ENCODE measurements at regions of chr13 and their contacts with region 1.

Region 1: DNA sequence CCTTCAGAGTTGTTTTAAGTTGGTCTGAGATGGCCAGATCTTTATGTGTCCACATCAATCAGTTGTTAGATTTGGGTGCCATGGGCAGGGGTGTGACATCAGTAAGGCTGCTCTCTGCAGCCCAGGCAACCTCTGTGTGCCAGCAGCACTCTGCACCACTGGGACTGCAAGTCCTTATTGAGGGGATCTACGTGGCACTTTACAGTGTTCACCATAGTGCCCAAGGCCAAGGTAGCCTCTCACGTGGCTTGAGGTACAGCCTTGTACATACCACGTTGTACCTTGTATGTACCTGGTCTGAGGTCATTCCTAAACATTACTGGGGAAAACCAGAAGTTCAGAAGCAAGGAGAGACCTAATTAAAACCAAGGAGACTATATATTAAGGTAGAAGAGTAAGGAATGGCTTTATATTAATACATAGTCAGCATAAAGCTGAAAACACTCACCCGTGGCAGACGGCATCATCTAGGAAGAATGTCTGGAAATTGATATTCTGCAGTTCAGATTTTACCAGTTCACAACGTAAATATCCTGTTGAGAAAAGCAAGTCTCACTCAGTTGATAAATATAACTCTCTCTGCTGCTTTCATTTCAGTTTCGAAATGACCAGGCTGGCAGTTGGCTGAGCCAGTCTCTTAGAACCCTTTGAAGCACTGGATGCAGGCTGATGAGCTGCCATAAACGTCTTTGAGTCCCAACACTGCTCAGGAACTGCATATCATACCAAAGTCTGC is 128.8 kb downstream of the ZDHHC20 start:
- DNase-seq: peak; percentile 16
- H3K4me3 Mint-ChIP-seq: peak overlapping the region; percentile 35
- H3K27ac Mint-ChIP-seq: peak overlapping the region; percentile 79
- H3K4me1 Mint-ChIP-seq: peaks cover 45% of the 10 kb centered on the region
- H3K27me3 Mint-ChIP-seq: no peaks in the 10 kb centered on the region

Region 2: GRCh38 chr13:21316376-21316775 is 13.9 kb before region 1 on chr13:
- intact Hi-C with region 1: loop called (anchors 1 kb)
- DNase-seq: no peak
- H3K4me3 Mint-ChIP-seq: no peak overlapping the region
- H3K27ac Mint-ChIP-seq: peak overlapping the region; percentile 62
- H3K4me1 Mint-ChIP-seq: peaks cover 8% of the 10 kb centered on the region
- H3K27me3 Mint-ChIP-seq: no peaks in the 10 kb centered on the region

Region 3: GRCh38 chr13:21344662-21345176 is 14.4 kb after region 1 on chr13:
- intact Hi-C with region 1: loop called (anchors 1 kb)
- DNase-seq: peak; percentile 27
- H3K4me3 Mint-ChIP-seq: peak overlapping the region; percentile 76
- H3K27ac Mint-ChIP-seq: peak overlapping the region; percentile 86
- H3K4me1 Mint-ChIP-seq: peaks cover 31% of the 10 kb centered on the region
- H3K27me3 Mint-ChIP-seq: no peaks in the 10 kb centered on the region

Measured in activated T-helper 1 cell treated with anti-CD3 and anti-CD28 coated beads, Interleukin-12 subunit alpha, Interleukin-12 subunit beta, Interleukin-2, Interleukin-4 antibody, amounts not matched to agents 30 ng/mL and 10 ng/mL and 1 ng/mL, durations not matched to agents 14 hours and 24 hours and 36 hours (primary cell).